AG04450 (cell line): ENCODE measurements at regions of chr7 and their contacts with region 1.

Region 1: DNA sequence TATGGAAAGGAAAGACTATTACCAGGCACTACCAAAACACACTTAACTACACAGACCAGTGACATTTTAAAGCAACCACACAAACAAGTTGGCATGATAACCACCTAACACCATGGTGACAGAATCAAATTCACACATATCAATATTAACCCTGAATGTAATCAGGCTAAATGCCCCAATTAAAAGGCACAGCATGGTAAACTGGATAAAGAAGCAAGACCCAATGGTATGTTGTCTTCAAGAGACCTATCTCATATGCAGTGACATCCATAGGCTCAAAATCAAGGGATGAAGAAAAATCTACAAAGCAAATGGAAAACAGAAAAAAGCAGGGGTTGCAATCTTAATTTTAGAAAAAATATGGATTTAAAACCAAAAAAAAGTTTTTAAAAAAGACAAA is 86.0 kb downstream of the SAMD9 start:
- DNase-seq: no peak
- H3K4me3 ChIP-seq: no peak overlapping the region
- H3K27ac ChIP-seq: no peak overlapping the region
- H3K27me3 ChIP-seq: no peaks in the 10 kb centered on the region
- CTCF ChIP-seq: no peak

Region 2: DNA sequence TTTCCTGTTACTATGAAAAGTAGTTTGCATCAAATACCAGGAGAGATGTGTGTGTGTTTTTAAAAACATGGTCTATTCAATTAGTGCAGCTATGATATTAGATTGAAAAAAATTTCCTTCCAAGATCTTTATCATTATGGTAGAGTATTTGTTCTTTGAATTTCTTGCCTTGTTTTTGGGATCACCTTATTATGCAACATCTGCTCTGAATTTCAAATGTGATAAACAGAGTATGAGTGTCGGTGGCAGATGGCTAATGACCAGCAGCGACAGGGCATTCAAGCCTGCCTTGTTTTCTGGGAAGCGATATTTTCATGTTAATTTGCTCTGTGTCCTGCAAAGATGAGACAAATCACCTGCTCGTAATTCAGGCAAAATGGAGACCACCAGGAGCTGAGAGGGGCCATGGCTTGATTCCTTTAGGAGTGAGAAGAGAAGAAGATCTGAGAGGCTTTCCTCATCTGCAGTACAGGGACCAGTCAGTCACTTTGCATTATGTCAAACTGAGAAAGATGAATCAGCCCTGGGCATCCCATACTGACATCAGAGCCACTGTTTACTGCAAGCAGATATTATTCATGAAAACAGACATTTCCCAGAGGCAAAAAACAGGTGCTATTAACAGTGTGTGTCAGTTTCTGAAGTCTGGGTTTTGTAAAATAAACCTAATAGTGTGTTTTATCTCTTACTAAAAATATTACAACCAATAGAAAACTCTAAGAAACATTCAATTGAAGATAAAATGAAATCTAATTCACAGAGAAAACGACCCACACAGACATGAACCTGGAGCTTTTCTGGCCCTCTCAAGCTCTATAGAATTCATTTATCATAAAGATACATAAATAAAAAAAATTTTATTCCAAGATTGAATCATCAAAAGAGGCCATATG is 263.0 kb before region 1 on chr7:
- CTCF ChIA-PET with region 1: no interaction called
- POLR2A ChIA-PET with region 1: interaction called, 13 read pairs
- DNase-seq: no peak
- H3K4me3 ChIP-seq: no peak overlapping the region
- H3K27ac ChIP-seq: no peak overlapping the region
- H3K27me3 ChIP-seq: no peaks in the 10 kb centered on the region
- CTCF ChIP-seq: no peak

Region 3: GRCh38 chr7:92944633-92945032 is 87.2 kb before region 1 on chr7:
- CTCF ChIA-PET with region 1: no interaction called
- POLR2A ChIA-PET with region 1: no interaction called
- DNase-seq: no peak
- H3K4me3 ChIP-seq: no peak overlapping the region
- H3K27ac ChIP-seq: no peak overlapping the region
- H3K27me3 ChIP-seq: no peaks in the 10 kb centered on the region
- CTCF ChIP-seq: no peak